Activated B cell treated with CpG ODN at 0.5 μM for 24 hours (primary cell): ENCODE measurements at regions of chr22 and their contacts with region 1.

Region 1: DNA sequence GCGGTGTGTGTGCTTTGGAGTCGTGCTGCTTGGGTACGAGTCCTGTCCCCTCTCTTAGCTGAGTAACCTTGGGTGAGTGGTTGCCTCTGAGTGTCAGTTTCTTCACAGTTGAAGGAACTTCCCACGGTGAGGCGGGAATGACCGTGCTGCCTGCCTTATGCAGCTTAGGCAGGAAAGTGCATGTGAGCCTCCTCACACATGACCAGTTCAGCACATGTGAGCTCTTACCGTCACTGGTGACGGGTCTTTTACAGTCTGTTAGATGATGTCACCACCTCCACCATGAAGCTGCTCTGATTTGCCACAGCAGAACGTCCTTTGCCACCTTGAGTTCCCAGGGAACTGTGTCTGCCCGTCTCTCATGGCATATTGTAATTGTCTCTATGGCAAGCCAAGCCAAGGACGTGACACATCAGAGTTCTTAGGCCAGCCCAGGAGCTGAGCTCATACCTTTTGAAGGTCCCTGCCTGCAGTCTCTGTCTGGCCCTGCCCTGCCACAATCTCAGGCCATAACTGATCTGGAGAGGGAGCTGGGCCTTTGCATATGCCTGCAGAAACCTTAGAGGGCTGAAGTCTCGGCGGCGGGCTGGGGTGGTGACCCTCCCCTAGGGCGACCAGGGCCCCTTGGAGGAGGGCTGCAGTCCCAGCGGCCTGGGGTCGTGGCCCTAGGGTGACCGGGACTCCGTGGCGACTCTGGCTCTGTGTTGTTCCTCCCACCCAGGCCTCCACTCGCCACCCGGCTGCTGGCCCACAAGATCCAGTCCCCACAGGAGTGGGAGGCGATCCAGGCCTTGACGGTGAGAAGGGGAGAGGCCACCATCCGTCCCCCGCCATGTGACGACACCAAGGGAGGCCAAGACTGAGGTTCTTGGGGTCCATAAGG is 7.8 kb downstream of the GGA1 start:
- DNase-seq: no peak
- ATAC-seq: peak; percentile 47
- H3K4me3 Mint-ChIP-seq: no peak overlapping the region
- H3K27ac Mint-ChIP-seq: peak overlapping the region; percentile 30
- H3K4me1 Mint-ChIP-seq: peaks cover 25% of the 10 kb centered on the region
- H3K27me3 Mint-ChIP-seq: no peaks in the 10 kb centered on the region
- CTCF ChIP-seq: no peak

Region 2: GRCh38 chr22:37633625-37634416 is 17.4 kb after region 1 on chr22:
- CTCF ChIA-PET with region 1: interaction called, 6 read pairs
- POLR2A ChIA-PET with region 1: interaction called, 104 read pairs
- intact Hi-C with region 1: loop called (anchors 1 kb)
- DNase-seq: peak; percentile 69
- ATAC-seq: peak; percentile 78
- H3K4me3 Mint-ChIP-seq: peak overlapping the region; percentile 74
- H3K27ac Mint-ChIP-seq: peak overlapping the region; percentile 93
- H3K4me1 Mint-ChIP-seq: peaks cover 67% of the 10 kb centered on the region
- H3K27me3 Mint-ChIP-seq: no peaks in the 10 kb centered on the region
- CTCF ChIP-seq: no peak

Region 3: DNA sequence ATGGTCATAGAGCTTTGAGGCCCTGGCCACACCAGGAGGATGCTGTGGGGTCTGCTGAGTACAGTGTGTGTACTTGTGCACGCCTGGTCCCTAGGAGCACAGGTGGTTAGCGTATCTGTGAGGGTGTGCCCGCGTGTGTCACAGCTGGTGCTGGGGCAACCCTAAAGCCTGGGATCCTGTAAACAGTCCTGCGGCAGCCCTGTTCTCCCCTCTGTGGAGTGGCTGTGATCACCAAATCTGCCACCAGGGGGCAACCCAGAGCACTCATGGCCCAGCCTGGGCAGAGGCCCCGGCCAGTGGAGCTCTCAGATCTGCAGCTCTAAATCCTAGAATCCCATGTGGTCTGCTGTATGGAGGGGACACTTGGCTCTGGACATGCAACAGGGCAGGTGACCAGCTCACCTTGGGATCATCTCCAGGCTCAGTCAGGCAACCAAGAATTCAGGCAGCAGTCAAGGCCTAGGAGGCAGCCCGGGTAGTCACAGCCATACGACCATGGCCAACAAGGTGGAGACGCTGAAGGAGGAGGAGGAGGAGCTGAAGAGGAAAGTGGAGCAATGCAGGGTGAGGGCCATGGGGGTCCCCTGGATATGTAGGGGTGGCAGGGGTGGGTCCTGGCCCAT is 26.9 kb after region 1 on chr22:
- CTCF ChIA-PET with region 1: interaction called, 12 read pairs
- POLR2A ChIA-PET with region 1: interaction called, 3 read pairs
- intact Hi-C with region 1: no loop called
- DNase-seq: peak; percentile 85
- ATAC-seq: peak; percentile 80
- H3K4me3 Mint-ChIP-seq: peak overlapping the region; percentile 28
- H3K27ac Mint-ChIP-seq: peak overlapping the region; percentile 59
- H3K4me1 Mint-ChIP-seq: peaks cover 34% of the 10 kb centered on the region
- H3K27me3 Mint-ChIP-seq: no peaks in the 10 kb centered on the region
- CTCF ChIP-seq: peak; percentile 64